GM12878 (cell line): ENCODE measurements at regions of chr1 and their contacts with region 1.

Region 1: DNA sequence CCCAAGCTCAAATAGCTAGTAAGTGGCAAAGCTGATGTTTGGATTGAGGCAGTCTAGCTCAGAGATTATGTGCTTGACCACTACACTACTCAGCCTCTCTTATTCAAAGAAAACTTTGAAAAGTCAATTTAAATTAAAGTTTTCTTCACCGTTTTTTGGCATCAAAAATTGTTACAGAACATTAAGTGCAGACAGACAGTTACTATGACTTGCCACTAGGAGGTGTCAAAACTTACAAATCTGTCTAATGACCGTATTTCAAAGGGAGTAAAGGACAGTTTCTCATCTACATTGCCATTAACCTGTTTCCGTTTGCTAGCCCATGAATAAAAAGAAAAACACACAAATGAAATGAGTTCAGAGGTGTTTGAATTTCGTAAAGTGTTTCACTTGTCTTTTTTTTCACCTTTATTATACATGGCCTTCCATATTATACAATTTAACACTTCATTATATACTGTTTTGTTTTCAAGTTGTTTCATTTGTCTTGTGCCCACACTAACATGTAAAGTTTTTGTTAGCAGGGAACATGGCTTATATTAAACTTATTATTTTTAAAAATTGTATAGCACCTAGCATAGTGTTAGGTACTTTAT is 57.4 kb upstream of the MTF2 start:
- DNase-seq: no peak
- ATAC-seq: peak; percentile 94
- H3K4me3 ChIP-seq: no peak overlapping the region
- H3K27ac ChIP-seq: no peak overlapping the region
- H3K4me1 ChIP-seq: no peaks in the 10 kb centered on the region; the same call in 1 of the 2 replicates
- H3K27me3 ChIP-seq: no peaks in the 10 kb centered on the region; a peak in 1 of 4 replicates
- CTCF ChIP-seq: peak; percentile 70 to 78 (median 71)
- EP300 ChIP-seq: no peak
- POLR2A ChIP-seq: no peak
- RAD21 ChIP-seq: peak; percentile 93

Region 2: DNA sequence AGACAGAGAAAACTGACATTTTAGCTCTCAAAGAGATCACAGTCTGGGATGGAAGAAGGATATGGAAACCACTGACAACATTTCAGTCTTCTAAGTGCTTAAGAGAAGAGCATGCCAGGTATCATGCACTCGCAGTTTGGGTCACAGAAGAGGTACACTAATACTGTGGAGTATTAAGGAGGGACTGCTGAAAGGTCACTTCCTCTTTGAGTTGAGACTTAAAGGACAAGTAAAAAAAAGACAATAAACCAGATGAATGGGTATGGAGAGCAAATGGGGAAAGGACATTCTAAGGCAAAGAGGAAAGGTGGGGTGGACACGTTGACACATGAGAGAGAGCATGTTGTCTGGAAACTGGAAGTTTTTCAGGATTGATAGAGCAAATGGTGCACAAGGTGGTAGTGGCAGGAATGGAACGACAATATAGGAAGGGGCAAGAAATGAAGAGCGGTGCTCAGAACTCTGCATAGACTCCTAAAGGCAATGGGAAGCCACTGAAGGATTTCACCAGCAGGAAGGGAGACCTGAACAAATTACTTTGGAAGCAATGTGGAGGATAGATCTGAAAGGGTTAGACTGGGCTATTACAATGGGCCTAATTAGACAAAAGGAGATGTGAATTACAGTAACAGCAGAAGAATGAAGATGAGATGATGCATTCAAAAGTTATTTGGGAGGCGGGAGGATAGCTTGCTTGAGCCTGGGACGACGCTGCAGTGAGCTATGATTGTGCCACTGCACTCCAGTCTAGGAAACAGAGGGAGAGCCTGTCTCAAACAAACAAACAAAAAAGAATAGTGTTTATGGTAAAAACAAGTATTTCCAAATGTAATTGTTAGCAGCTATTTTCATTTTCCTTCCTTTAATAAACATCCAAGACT is 71.5 kb before region 1 on chr1:
- CTCF ChIA-PET with region 1: no interaction called
- POLR2A ChIA-PET with region 1: no interaction called
- RAD21 ChIA-PET with region 1: no interaction called
- SMC1A ChIA-PET with region 1: no interaction called
- in situ Hi-C with region 1: no loop called
- intact Hi-C with region 1: no loop called
- DNase-seq: no peak
- ATAC-seq: peak; percentile 61
- H3K4me3 ChIP-seq: no peak overlapping the region
- H3K27ac ChIP-seq: peak overlapping the region; percentile 79
- H3K4me1 ChIP-seq: peaks cover 37% of the 10 kb centered on the region
- H3K27me3 ChIP-seq: no peaks in the 10 kb centered on the region
- CTCF ChIP-seq: no peak
- EP300 ChIP-seq: no peak
- POLR2A ChIP-seq: no peak
- RAD21 ChIP-seq: no peak

Region 3: DNA sequence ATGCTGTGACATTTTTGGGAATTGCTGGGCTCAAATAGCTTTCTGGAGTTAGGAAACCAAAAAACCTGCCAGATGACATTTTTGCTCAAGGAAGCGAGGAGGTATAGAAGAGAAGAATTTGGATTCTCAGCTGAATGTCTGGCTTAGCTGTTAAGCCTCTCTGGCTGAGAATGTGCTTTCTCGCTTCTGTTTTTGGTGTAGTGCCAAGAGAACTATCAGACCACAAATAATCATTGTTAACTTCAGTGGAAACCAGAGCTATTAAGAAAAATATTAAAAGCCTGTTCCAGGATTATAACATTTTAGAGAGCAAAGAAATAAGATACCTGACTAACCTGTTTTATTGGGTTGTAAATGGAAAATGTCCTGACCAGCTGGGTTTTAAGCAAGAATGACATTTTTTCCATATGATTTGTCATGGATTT is 20.9 kb before region 1 on chr1:
- CTCF ChIA-PET with region 1: interaction called, 25 read pairs
- POLR2A ChIA-PET with region 1: no interaction called
- RAD21 ChIA-PET with region 1: interaction called, 4 read pairs
- SMC1A ChIA-PET with region 1: interaction called, 12 read pairs
- in situ Hi-C with region 1: no loop called
- intact Hi-C with region 1: no loop called
- DNase-seq: no peak
- ATAC-seq: peak; percentile 71
- H3K4me3 ChIP-seq: no peak overlapping the region
- H3K27ac ChIP-seq: no peak overlapping the region
- H3K4me1 ChIP-seq: peaks cover 6% of the 10 kb centered on the region
- H3K27me3 ChIP-seq: no peaks in the 10 kb centered on the region
- CTCF ChIP-seq: no peak
- EP300 ChIP-seq: no peak
- POLR2A ChIP-seq: no peak
- RAD21 ChIP-seq: no peak

Region 4: GRCh38 chr1:93033785-93034184 is 12.1 kb after region 1 on chr1:
- CTCF ChIA-PET with region 1: interaction called, 20 read pairs
- POLR2A ChIA-PET with region 1: no interaction called
- RAD21 ChIA-PET with region 1: interaction called, 9 read pairs
- SMC1A ChIA-PET with region 1: interaction called, 21 read pairs
- in situ Hi-C with region 1: no loop called
- intact Hi-C with region 1: no loop called
- DNase-seq: peak; percentile 48
- ATAC-seq: peak; percentile 97
- H3K4me3 ChIP-seq: peak overlapping the region; percentile 41; the same call in 1 of the 2 replicates
- H3K27ac ChIP-seq: peak overlapping the region; percentile 59
- H3K4me1 ChIP-seq: peaks cover 25% of the 10 kb centered on the region
- H3K27me3 ChIP-seq: no peaks in the 10 kb centered on the region
- CTCF ChIP-seq: no peak
- EP300 ChIP-seq: no peak
- POLR2A ChIP-seq: no peak
- RAD21 ChIP-seq: no peak

Region 5: GRCh38 chr1:93148001-93148400 is 126.4 kb after region 1 on chr1:
- CTCF ChIA-PET with region 1: no interaction called
- POLR2A ChIA-PET with region 1: no interaction called
- RAD21 ChIA-PET with region 1: no interaction called
- SMC1A ChIA-PET with region 1: no interaction called
- in situ Hi-C with region 1: no loop called
- intact Hi-C with region 1: loop called (anchors 2 kb)
- DNase-seq: no peak
- ATAC-seq: no peak
- H3K4me3 ChIP-seq: no peak overlapping the region
- H3K27ac ChIP-seq: no peak overlapping the region
- H3K4me1 ChIP-seq: no peaks in the 10 kb centered on the region
- H3K27me3 ChIP-seq: no peaks in the 10 kb centered on the region
- CTCF ChIP-seq: no peak
- EP300 ChIP-seq: no peak
- POLR2A ChIP-seq: 0 out of 2 replicates have a peak, but pooled peaks have one; percentile 16
- RAD21 ChIP-seq: no peak